Lower lobe of right lung (tissue), 2 donors: ENCODE measurements at regions of chr2 and their contacts with region 1.

Region 1: GRCh38 chr2:201167546-201167945 is 15.4 kb upstream of the CASP10 start:
- DNase-seq: no peak
- ATAC-seq: peak in 1 of 2 donors; percentile 35
- H3K4me3 ChIP-seq: no peak overlapping the region
- H3K27ac ChIP-seq: no peak overlapping the region
- H3K4me1 ChIP-seq: peaks cover under 1% of the 10 kb centered on the region
- H3K27me3 ChIP-seq: no peaks in the 10 kb centered on the region
- CTCF ChIP-seq: no peak

Region 2: GRCh38 chr2:201118121-201118960 is 49.2 kb before region 1 on chr2:
- intact Hi-C with region 1: loop called (anchors 10 kb)
- DNase-seq: peak; percentile 94
- ATAC-seq: peak; percentile 65 to 73
- H3K4me3 ChIP-seq: peak overlapping the region; percentile 77
- H3K27ac ChIP-seq: peak overlapping the region; percentile 100
- H3K4me1 ChIP-seq: peaks cover 40% of the 10 kb centered on the region
- H3K27me3 ChIP-seq: no peaks in the 10 kb centered on the region
- CTCF ChIP-seq: peak; percentile 55